Calu3 (cell line): ENCODE measurements at regions of chr7 and their contacts with region 1.

Region 1: DNA sequence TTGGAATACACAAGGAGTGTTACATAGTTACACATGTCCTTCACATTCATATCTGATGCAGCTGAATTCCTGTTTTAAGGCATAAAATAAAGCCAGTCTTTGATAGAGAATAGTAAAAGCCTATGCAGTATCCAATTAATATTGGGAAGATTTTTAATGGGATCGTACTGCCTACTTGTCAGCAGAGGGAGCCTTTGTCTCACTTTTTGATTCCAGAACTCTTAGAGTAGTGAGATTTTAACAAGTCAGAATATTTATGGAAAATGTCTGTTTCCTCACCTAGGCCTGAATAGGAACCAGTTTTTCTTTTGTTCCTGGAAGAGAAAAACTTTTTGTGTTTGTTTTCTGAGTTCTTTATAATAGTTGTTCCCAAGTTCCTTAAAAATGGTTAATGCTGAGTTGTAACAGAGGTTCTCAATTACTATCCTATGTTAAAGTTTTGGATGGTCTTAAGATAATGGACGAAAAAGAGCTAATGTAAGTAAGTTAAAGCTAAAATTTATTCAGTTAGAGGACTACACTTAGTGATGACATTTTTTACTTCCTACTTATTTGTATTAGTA is 114.0 kb downstream of the BBS9 start:
- DNase-seq: peak; percentile 15
- H3K4me3 Mint-ChIP-seq: no peak overlapping the region
- H3K27ac Mint-ChIP-seq: no peak overlapping the region
- H3K4me1 Mint-ChIP-seq: no peaks in the 10 kb centered on the region
- H3K27me3 Mint-ChIP-seq: no peaks in the 10 kb centered on the region
- CTCF ChIP-seq: peak; percentile 79

Region 2: GRCh38 chr7:33334349-33334748 is 90.9 kb after region 1 on chr7:
- CTCF ChIA-PET with region 1: no interaction called
- intact Hi-C with region 1: loop called (anchors 1 kb)
- DNase-seq: peak; percentile 28
- H3K4me3 Mint-ChIP-seq: no peak overlapping the region
- H3K27ac Mint-ChIP-seq: no peak overlapping the region
- H3K4me1 Mint-ChIP-seq: no peaks in the 10 kb centered on the region
- H3K27me3 Mint-ChIP-seq: peaks cover 15% of the 10 kb centered on the region
- CTCF ChIP-seq: peak; percentile 58

Region 3: GRCh38 chr7:33459340-33459751 is 215.9 kb after region 1 on chr7:
- CTCF ChIA-PET with region 1: no interaction called
- intact Hi-C with region 1: loop called (anchors 1 kb)
- DNase-seq: peak; percentile 37
- H3K4me3 Mint-ChIP-seq: no peak overlapping the region
- H3K27ac Mint-ChIP-seq: no peak overlapping the region
- H3K4me1 Mint-ChIP-seq: no peaks in the 10 kb centered on the region
- H3K27me3 Mint-ChIP-seq: no peaks in the 10 kb centered on the region
- CTCF ChIP-seq: peak; percentile 59

Region 4: DNA sequence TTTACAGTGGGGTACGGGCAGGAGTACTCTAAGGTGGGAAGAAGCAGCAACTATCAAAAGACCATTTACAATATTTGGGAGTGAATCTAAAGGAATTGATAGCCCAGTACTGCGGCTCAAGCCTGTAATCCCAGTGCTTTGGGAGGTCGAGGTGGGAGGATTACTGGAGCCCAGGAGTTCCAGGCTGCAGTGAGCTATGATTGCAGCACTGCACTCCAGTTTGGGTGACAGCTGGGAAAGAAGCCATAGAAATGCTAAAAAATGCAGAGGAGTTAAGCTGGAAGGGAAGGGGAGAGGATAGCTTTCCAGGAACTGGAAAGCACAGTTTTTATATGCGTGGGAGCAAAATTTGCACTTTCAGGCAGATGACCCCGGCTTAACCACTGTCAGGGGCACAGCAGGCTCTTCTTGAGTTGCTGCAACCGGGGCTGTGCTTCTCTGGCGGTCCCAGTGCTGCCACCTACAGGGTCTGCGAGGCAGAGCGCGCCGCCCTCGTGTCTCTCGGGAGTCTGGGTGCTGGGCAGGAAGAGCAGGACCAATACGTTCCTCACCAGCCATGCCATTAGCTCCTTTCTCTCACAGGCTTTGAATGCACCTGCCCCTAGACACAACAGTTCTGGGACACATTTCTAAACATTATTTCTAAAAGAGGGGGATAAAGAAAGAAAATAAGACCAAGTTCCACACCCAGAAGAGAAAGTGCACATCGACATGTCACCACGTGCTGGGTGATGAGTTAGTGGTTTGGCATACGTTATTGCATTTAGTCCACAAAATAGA is 651.8 kb after region 1 on chr7:
- CTCF ChIA-PET with region 1: no interaction called
- intact Hi-C with region 1: loop called (anchors 10 kb)
- DNase-seq: peak; percentile 95
- H3K4me3 Mint-ChIP-seq: no peak overlapping the region
- H3K27ac Mint-ChIP-seq: no peak overlapping the region
- H3K4me1 Mint-ChIP-seq: peaks cover 18% of the 10 kb centered on the region
- H3K27me3 Mint-ChIP-seq: peaks cover 72% of the 10 kb centered on the region
- CTCF ChIP-seq: peak; percentile 95

Region 5: DNA sequence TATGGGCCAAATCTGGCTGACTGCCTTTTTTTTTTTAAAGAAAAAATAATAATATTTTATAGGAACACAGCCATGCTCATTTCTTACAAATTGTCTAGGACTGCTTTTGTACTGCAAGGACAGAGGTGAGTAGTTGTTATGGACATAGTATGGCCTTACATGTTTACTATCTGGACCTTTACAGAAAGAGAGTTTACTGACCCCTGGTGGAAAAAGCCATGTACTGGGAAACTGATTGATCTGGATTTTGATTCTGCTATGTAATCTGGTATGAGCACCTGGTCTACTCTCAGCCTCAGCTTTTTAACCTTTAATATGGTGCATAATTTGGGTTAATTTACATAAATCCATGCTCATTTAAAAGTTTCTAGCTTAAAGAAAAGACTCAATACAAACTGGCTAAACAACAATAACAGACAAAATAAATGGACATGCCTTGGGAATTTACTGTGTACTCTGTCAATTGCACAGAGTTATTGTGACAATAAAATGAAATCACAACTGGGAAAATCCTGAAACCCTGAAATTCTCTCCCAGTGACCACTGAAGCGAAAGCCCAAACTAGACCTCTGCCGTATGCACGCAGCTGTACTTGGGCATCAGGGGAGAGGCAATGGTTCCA is 922.6 kb after region 1 on chr7:
- CTCF ChIA-PET with region 1: no interaction called
- intact Hi-C with region 1: loop called (anchors 10 kb)
- DNase-seq: peak; percentile 22
- H3K4me3 Mint-ChIP-seq: no peak overlapping the region
- H3K27ac Mint-ChIP-seq: no peak overlapping the region
- H3K4me1 Mint-ChIP-seq: no peaks in the 10 kb centered on the region
- H3K27me3 Mint-ChIP-seq: peaks cover 36% of the 10 kb centered on the region
- CTCF ChIP-seq: peak; percentile 50